Activated CD8-positive, alpha-beta T cell treated with anti-CD3 and anti-CD28 coated beads, Interleukin-2, amount 10 ng/mL, durations not matched to agents 7 days and 5 days (primary cell): ENCODE measurements at regions of chr19 and their contacts with region 1.

Region 1: GRCh38 chr19:46661020-46661731 is at the start of gene DACT3:
- DNase-seq: peak; percentile 100
- ATAC-seq: peak; percentile 94
- H3K4me3 Mint-ChIP-seq: peak within 1 kb of the TSS; percentile 71
- H3K27ac Mint-ChIP-seq: peak within 1 kb of the TSS; percentile 80
- H3K4me1 Mint-ChIP-seq: peaks cover 21% of the 10 kb centered on the region
- H3K27me3 Mint-ChIP-seq: peaks cover 24% of the 10 kb centered on the region
- total RNA-seq, gene DACT3: 0.42 TPM

Region 2: DNA sequence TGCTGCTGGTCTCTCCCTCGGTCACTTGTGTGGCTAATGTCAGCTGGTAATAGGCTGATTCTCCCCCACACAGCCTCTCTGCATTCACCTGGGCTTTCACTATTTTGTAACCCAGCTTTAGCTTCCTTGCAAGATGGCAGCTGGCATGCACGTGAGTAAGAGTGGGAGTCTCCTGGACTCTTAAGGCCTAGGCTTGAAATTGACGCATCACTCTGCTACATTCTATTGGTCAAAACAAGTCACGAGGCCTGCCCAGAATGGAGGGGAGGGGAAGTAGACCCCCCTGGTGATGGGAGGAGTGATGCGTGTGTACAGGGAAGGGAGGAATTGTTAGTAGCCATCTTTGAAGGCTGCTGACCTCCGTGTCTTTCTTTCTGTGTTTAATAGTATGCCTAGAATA is 140.6 kb before region 1 on chr19:
- CTCF ChIA-PET with region 1: interaction called, 31 read pairs
- POLR2A ChIA-PET with region 1: interaction called, 3 read pairs
- DNase-seq: no peak
- ATAC-seq: no peak
- H3K4me3 Mint-ChIP-seq: no peak overlapping the region
- H3K27ac Mint-ChIP-seq: peak overlapping the region; percentile 67
- H3K4me1 Mint-ChIP-seq: peaks cover 73% of the 10 kb centered on the region
- H3K27me3 Mint-ChIP-seq: no peaks in the 10 kb centered on the region

Region 3: GRCh38 chr19:46537136-46538097 is 123.8 kb before region 1 on chr19:
- CTCF ChIA-PET with region 1: interaction called, 14 read pairs
- POLR2A ChIA-PET with region 1: no interaction called
- DNase-seq: peak; percentile 70
- ATAC-seq: peak; percentile 75
- H3K4me3 Mint-ChIP-seq: no peak overlapping the region
- H3K27ac Mint-ChIP-seq: no peak overlapping the region
- H3K4me1 Mint-ChIP-seq: peaks cover 5% of the 10 kb centered on the region
- H3K27me3 Mint-ChIP-seq: peaks cover 3% of the 10 kb centered on the region

Region 4: DNA sequence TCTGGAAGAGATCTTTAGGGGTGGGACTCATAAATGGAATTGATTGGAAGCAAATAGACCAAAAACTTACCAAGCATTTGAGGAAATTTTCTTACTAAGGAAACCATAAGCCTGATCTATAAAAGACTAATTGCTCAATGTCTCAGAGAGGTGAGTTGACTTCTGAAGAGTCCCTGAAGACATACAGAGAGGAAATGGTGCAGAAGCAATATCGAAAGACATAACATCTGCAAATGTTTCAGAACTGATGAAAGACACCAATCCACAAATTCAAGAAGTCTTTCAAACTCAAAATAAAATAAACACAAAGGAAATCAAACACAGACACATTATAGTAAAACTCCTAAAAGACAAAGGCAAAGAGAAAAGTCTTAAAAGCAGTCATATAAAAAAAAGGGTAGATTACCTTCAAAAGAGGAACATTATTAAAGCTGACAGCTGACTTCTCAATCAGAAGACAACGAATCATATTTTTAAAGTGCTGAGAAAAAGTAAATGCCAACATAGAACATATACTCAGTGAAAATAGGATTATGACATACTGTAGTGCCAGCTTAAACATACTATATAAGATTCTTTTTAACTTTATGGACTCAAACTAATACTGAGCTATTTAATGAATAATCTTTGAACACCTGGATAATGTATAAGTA is 105.4 kb before region 1 on chr19:
- CTCF ChIA-PET with region 1: no interaction called
- POLR2A ChIA-PET with region 1: no interaction called
- DNase-seq: no peak
- ATAC-seq: no peak
- H3K4me3 Mint-ChIP-seq: no peak overlapping the region
- H3K27ac Mint-ChIP-seq: no peak overlapping the region
- H3K4me1 Mint-ChIP-seq: no peaks in the 10 kb centered on the region
- H3K27me3 Mint-ChIP-seq: peaks cover 12% of the 10 kb centered on the region

Region 5: GRCh38 chr19:46600384-46601317 is 60.5 kb before region 1 on chr19:
- CTCF ChIA-PET with region 1: interaction called, 38 read pairs
- POLR2A ChIA-PET with region 1: interaction called, 26 read pairs
- DNase-seq: peak; percentile 98
- ATAC-seq: peak; percentile 91
- H3K4me3 Mint-ChIP-seq: peak overlapping the region; percentile 100
- H3K27ac Mint-ChIP-seq: peak overlapping the region; percentile 100
- H3K4me1 Mint-ChIP-seq: peaks cover 37% of the 10 kb centered on the region
- H3K27me3 Mint-ChIP-seq: peaks cover 3% of the 10 kb centered on the region

Region 6: DNA sequence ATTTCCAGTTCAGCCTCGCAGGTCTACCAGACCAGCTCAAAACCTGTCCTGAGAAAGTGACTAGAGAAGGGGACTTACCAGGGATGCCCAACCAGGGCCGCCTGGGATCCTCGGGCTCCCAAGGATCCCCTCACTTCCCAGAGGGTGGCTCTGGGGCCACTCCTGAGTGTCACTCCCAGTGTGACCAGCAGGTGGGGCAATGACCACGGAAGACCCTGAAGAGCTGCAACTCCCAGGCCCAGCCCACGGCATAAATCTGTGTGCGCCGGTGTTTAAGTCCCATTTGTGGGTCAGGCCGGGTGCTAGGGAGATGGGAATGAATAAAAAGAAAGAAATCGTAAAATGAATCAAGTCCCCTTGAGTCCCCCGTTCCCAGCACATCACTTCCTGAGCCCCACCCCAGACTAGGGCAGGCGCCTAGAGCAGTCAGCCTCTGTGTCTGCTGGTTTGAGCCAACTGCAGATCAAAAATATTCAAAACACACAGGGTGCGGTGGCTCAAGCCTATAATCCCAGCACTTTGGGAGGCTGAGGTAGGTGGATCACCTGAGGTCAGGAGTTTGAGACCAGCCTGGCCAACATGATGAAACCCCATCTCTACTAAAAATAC is 47.0 kb before region 1 on chr19:
- CTCF ChIA-PET with region 1: interaction called, 350 read pairs
- POLR2A ChIA-PET with region 1: interaction called, 15 read pairs
- DNase-seq: peak; percentile 88
- ATAC-seq: peak; percentile 52
- H3K4me3 Mint-ChIP-seq: no peak overlapping the region
- H3K27ac Mint-ChIP-seq: peak overlapping the region; percentile 78
- H3K4me1 Mint-ChIP-seq: peaks cover 81% of the 10 kb centered on the region
- H3K27me3 Mint-ChIP-seq: no peaks in the 10 kb centered on the region

Region 7: GRCh38 chr19:46634045-46634655 is 27.0 kb before region 1 on chr19:
- CTCF ChIA-PET with region 1: interaction called, 31 read pairs
- POLR2A ChIA-PET with region 1: interaction called, 3 read pairs
- DNase-seq: peak; percentile 96
- ATAC-seq: peak; percentile 70
- H3K4me3 Mint-ChIP-seq: peak overlapping the region; percentile 73
- H3K27ac Mint-ChIP-seq: peak overlapping the region; percentile 81
- H3K4me1 Mint-ChIP-seq: peaks cover 27% of the 10 kb centered on the region
- H3K27me3 Mint-ChIP-seq: peaks cover 2% of the 10 kb centered on the region

Region 8: GRCh38 chr19:46692918-46693722 is 31.9 kb after region 1 on chr19:
- CTCF ChIA-PET with region 1: no interaction called
- POLR2A ChIA-PET with region 1: no interaction called
- DNase-seq: no peak
- ATAC-seq: no peak
- H3K4me3 Mint-ChIP-seq: no peak overlapping the region
- H3K27ac Mint-ChIP-seq: peak overlapping the region; percentile 1
- H3K4me1 Mint-ChIP-seq: no peaks in the 10 kb centered on the region
- H3K27me3 Mint-ChIP-seq: no peaks in the 10 kb centered on the region

Region 9: GRCh38 chr19:46728693-46729676 is 67.8 kb after region 1 on chr19:
- CTCF ChIA-PET with region 1: interaction called, 24 read pairs
- POLR2A ChIA-PET with region 1: no interaction called
- DNase-seq: peak; percentile 87
- ATAC-seq: peak; percentile 86
- H3K4me3 Mint-ChIP-seq: peak overlapping the region; percentile 25
- H3K27ac Mint-ChIP-seq: peak overlapping the region; percentile 75
- H3K4me1 Mint-ChIP-seq: peaks cover 31% of the 10 kb centered on the region
- H3K27me3 Mint-ChIP-seq: no peaks in the 10 kb centered on the region

Region 10: DNA sequence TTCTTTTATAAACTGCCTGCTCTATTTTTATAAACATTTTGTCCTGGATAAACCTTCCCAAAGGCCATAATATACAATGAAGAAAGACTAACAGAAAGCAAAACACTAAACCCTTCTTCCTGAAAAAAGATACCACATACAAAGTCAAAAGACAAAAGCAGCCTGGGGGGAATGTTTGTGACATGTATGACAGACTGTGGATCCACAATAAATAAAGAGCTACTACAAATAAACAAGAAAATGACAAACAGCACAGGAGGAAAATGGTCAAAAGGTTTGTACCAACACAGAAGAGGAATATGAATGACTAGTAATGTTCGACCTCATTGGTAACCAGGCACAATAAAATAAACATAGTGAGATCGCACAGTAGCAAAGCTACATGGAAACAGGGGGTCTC is 169.7 kb after region 1 on chr19:
- CTCF ChIA-PET with region 1: no interaction called
- POLR2A ChIA-PET with region 1: no interaction called
- DNase-seq: no peak
- ATAC-seq: no peak
- H3K4me3 Mint-ChIP-seq: no peak overlapping the region
- H3K27ac Mint-ChIP-seq: no peak overlapping the region
- H3K4me1 Mint-ChIP-seq: peaks cover 3% of the 10 kb centered on the region
- H3K27me3 Mint-ChIP-seq: no peaks in the 10 kb centered on the region